ENCODE measurements at regions of chr22 and their contacts with region 1.

Region 1: DNA sequence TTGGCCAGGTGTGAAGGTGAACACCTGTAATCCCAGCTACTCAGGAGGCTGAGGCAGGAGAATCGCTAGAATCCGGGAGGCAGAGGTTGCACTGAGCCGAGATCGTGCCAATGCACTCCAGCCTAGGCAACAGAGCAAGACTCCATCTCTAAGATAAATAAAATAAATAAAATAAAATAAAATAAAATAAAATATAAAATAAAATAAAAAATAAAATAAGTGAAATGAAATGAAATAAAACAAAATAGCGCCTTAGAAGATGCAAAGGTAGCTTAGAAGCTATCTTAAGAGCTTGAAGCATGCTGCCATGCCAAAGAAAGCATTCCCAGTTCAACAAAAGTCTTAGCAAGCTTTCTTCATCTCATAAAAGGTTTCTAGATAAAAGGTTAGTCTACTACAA is 6.9 kb upstream of the APOBEC3C start:
- DNase-seq: no peak
- H3K4me3 ChIP-seq: no peak overlapping the region
- CTCF ChIP-seq: no peak

Region 2: DNA sequence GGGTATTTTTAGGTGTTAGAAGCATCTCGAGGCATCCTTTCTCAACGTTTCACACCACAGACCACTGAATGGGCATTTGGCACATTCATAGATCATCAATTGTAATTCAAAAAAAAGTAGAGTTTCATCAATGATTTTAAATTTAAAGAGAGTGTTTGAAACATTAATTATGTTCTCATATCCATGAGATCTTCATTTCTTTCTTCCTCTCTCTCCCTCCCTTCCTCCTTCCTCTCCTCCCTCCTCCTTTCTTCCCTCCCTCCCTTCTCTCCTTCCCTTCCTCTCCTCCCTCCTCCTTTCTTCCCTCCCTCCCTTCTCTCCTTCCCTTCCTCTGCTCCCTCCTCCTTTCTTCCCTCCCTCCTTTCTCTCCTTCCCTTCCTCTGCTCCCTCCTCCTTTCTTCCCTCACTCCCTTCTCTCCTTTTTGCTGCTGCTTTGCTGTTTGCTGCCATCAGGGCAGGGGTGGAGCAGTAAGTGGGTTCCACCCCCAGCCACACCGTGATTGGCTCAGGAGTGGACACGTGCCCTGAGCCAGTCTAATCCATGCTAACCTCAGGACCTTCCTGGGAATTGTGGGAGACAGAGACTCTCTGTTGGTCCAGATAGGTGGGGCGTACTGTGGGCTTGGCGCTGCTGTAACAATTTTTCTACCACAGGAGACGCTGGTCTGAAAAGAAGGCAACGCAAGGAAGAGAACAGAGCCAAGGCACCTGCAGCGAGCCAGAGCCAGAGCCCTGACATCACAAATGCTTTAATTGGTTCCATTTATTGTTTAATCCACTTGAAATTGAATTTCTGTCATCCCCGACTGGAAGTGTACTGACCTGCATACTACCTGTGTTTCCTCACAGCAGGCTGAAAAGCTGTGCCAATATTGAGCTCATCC is 83.5 kb before region 1 on chr22:
- in situ Hi-C with region 1: no loop called
- DNase-seq: peak; percentile 89
- H3K4me3 ChIP-seq: peak overlapping the region; percentile 20
- CTCF ChIP-seq: peak; percentile 55

Region 3: DNA sequence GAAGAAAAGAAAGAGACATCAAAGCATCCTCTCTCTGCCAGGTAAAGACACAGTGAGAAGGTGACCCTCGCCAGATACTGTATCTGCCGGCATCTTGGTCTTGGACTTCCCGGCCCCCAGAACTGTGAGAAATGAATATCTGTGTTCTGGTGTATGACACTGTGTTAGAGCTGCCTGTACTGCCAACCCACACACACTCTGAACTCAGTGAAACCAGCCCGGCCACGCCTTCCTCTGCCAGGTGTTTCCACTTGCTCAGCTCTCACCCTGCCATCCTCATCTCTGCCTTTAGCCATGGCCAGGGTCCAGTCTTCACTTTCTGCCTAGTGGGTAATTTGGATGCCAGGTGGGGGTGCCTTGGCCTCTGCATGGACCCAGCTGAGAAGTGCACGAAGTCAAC is 121.3 kb after region 1 on chr22:
- in situ Hi-C with region 1: loop called (anchors 5 kb)
- DNase-seq: no peak
- H3K4me3 ChIP-seq: no peak overlapping the region
- CTCF ChIP-seq: no peak

Measured in astrocyte of the cerebellum (primary cell).